Naive thymus-derived CD4-positive, alpha-beta T cell (primary cell): ENCODE measurements at regions of chr4 and their contacts with region 1.

Region 1: DNA sequence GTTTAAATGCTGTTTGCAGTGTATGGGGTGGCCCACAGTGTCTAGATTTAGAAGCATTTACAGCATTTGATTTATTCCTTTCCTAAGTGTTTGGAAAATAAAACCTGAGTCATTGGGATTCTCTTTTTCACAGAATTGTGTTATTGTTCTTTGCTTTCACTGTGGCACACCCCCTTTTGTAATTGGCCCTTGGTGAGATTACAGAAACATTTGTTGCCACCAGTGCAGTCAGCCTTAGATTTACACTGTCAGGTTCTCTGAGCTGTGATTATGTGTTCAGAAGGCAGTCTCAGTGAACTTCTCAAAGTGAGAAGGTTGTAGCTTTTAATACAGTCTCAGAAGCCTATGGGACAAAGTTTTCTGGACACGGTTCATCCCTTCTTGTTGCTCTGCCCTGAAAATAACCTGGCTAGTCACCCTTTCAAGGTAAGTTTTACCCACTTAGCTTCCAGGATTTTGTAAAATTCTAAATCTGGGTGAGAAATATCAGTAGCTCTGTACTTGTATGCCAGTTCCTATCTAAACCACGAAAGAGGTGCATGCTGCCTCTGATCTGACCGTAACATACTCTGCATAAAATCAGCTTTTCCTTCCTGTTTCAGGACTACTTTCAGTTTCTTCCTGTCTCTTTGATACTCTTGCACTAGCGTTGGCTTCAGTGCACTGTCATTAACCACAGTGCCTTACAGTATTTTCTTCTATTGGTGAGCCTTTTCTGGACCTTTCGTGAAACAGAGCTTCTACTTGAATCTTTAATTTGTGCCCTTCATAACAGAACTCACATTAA is 12.6 kb downstream of the RUFY3 start:
- DNase-seq: peak in 7 of 9 donors; percentile 52 to 74 (median 68)
- ATAC-seq: peak; percentile 91
- H3K4me3 ChIP-seq: peak overlapping the region; percentile 52
- H3K4me3 Mint-ChIP-seq: peak overlapping the region; percentile 67 to 92 (median 82)
- H3K27ac ChIP-seq: peak overlapping the region; percentile 73
- H3K27ac Mint-ChIP-seq: peak overlapping the region; percentile 33 to 94 (median 87)
- H3K4me1 ChIP-seq: peaks cover 34 to 42% of the 10 kb centered on the region in 2 donors
- H3K4me1 Mint-ChIP-seq: peaks cover 23 to 57% (median 48%) of the 10 kb centered on the region in 7 donors
- H3K27me3 ChIP-seq: no peaks in the 10 kb centered on the region
- H3K27me3 Mint-ChIP-seq: no peaks in the 10 kb centered on the region

Region 2: DNA sequence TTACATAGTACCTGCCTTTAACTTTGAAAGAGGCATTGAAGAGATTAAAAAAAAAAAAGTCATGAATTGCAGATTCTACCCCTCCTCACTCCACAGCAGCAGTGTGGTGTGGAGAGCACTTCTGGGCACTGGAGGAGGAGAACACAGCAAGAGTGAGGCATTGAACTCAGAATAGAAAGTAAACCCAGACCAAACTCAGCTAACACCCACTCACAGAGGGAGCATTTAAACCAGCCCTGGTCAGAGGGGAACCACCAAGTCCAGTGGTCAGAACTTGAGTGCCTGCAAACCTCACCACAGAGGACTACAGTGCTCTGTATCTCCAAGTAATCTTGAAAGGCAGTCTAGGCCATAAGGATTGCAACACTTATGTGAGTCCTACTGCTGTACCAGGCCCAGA is 1065.7 kb before region 1 on chr4:
- CTCF ChIA-PET with region 1: no interaction called
- POLR2A ChIA-PET with region 1: no interaction called
- intact Hi-C with region 1: no loop called
- DNase-seq: no peak
- ATAC-seq: no peak
- H3K4me3 ChIP-seq: no peak overlapping the region
- H3K4me3 Mint-ChIP-seq: no peak overlapping the region
- H3K27ac ChIP-seq: no peak overlapping the region
- H3K27ac Mint-ChIP-seq: no peak overlapping the region
- H3K4me1 ChIP-seq: no peaks in the 10 kb centered on the region
- H3K4me1 Mint-ChIP-seq: peaks cover 0 to 5% (median under 1%) of the 10 kb centered on the region in 7 donors
- H3K27me3 ChIP-seq: no peaks in the 10 kb centered on the region
- H3K27me3 Mint-ChIP-seq: peaks cover 4 to 13% (median 6%) of the 10 kb centered on the region in 5 donors

Region 3: GRCh38 chr4:70601422-70602039 is 132.8 kb before region 1 on chr4:
- CTCF ChIA-PET with region 1: no interaction called
- POLR2A ChIA-PET with region 1: no interaction called
- intact Hi-C with region 1: loop called in 1 of 2 experiments (anchors 1 kb)
- DNase-seq: peak; percentile 29 to 72 (median 61)
- ATAC-seq: peak; percentile 90
- H3K4me3 ChIP-seq: no peak overlapping the region
- H3K4me3 Mint-ChIP-seq: no peak overlapping the region
- H3K27ac ChIP-seq: no peak overlapping the region
- H3K27ac Mint-ChIP-seq: no peak overlapping the region
- H3K4me1 ChIP-seq: no peaks in the 10 kb centered on the region
- H3K4me1 Mint-ChIP-seq: peaks cover 0 to 4% (median 0%) of the 10 kb centered on the region in 7 donors
- H3K27me3 ChIP-seq: no peaks in the 10 kb centered on the region
- H3K27me3 Mint-ChIP-seq: peaks cover 0 to 20% (median 4%) of the 10 kb centered on the region in 5 donors

Region 4: GRCh38 chr4:70687821-70688794 is 46.3 kb before region 1 on chr4 and contains the start of gene UTP3:
- CTCF ChIA-PET with region 1: interaction called, 7 read pairs
- POLR2A ChIA-PET with region 1: interaction called, 56 read pairs
- intact Hi-C with region 1: loop called (anchors 1 kb)
- DNase-seq: peak; percentile 85 to 95 (median 92)
- ATAC-seq: peak; percentile 95
- H3K4me3 ChIP-seq: peak within 1 kb of the TSS; percentile 69
- H3K4me3 Mint-ChIP-seq: peak within 1 kb of the TSS; percentile 93 to 99 (median 98)
- H3K27ac ChIP-seq: peak within 1 kb of the TSS; percentile 94
- H3K27ac Mint-ChIP-seq: peak within 1 kb of the TSS; percentile 93 to 100 (median 99)
- H3K4me1 ChIP-seq: peaks cover 7 to 13% of the 10 kb centered on the region in 2 donors
- H3K4me1 Mint-ChIP-seq: peaks cover 12 to 48% (median 46%) of the 10 kb centered on the region in 7 donors
- H3K27me3 ChIP-seq: no peaks in the 10 kb centered on the region
- H3K27me3 Mint-ChIP-seq: no peaks in the 10 kb centered on the region
- total RNA-seq, gene UTP3: 17.4 to 44.9 (median 36.5) TPM

Region 5: DNA sequence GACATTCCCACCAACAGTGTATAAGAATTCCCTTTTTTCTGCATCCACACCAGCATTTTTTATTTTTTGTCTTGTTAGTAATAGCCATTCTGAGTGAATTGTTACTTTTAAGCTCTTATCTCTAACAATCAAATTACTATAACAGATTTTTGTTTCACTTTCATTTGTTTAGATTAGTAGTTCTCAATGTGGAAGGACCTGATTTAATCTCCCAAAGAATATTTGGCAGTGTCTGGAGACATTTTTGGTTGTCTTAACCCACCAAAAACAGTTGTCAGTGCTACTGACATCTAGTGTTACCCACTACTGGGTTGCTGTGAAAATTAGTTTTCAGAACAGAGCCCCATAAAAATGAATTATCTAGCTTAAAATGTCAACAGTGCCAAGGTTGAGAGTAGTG is 25.3 kb after region 1 on chr4:
- CTCF ChIA-PET with region 1: interaction called, 4 read pairs
- POLR2A ChIA-PET with region 1: interaction called, 3 read pairs
- intact Hi-C with region 1: loop called in 1 of 2 experiments (anchors 2 kb)
- DNase-seq: peak in 1 of 9 donors; percentile 5
- ATAC-seq: no peak
- H3K4me3 ChIP-seq: no peak overlapping the region
- H3K4me3 Mint-ChIP-seq: peak overlapping the region in 9 of 10 donors; percentile 19 to 64 (median 56)
- H3K27ac ChIP-seq: no peak overlapping the region
- H3K27ac Mint-ChIP-seq: peak overlapping the region in 6 of 9 donors; percentile 3 to 72 (median 16)
- H3K4me1 ChIP-seq: no peaks in the 10 kb centered on the region
- H3K4me1 Mint-ChIP-seq: peaks cover 13 to 23% (median 16%) of the 10 kb centered on the region in 7 donors
- H3K27me3 ChIP-seq: no peaks in the 10 kb centered on the region
- H3K27me3 Mint-ChIP-seq: no peaks in the 10 kb centered on the region

Region 6: DNA sequence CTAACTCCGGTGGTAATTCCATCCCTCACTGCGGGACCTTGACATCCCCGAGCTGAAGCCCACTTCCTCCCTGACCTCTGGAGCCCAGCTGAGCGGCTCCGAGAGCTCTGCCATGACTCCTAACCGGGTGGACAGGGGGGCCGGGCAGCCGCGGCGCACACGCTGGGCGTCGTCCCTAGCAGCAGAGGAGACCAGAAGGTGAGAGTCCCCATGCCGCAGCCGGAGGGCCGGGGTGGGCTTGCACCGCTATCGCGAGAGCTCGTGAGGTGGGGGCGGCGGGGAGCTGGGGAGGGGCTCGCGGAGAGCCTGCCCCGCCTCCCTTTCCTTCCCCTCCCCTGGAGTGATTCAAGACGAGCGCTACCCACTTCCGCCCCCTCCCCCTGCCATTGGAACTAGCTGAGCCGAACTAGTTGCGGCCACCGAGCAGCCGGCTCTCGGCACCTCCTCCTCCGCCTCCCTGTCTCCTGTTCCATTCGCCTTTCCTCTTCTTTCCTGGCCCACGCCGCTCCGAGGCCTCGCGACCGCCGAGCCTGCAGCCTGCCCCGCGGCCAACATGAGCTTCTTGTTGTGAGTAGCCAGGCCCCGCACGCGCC is 167.7 kb after region 1 on chr4 and contains the start of gene MOB1B:
- CTCF ChIA-PET with region 1: interaction called, 13 read pairs
- POLR2A ChIA-PET with region 1: interaction called, 12 read pairs
- intact Hi-C with region 1: loop called (anchors 1 kb)
- DNase-seq: peak; percentile 59 to 89 (median 84)
- ATAC-seq: peak; percentile 98
- H3K4me3 ChIP-seq: peak within 1 kb of the TSS; percentile 87
- H3K4me3 Mint-ChIP-seq: peak within 1 kb of the TSS; percentile 94 to 100 (median 98)
- H3K27ac ChIP-seq: peak within 1 kb of the TSS; percentile 78
- H3K27ac Mint-ChIP-seq: peak within 1 kb of the TSS; percentile 86 to 96 (median 89)
- H3K4me1 ChIP-seq: peaks cover 6 to 14% of the 10 kb centered on the region in 2 donors
- H3K4me1 Mint-ChIP-seq: peaks cover 23 to 46% (median 40%) of the 10 kb centered on the region in 7 donors
- H3K27me3 ChIP-seq: no peaks in the 10 kb centered on the region
- H3K27me3 Mint-ChIP-seq: peaks cover 0 to 2% (median 0%) of the 10 kb centered on the region in 5 donors
- total RNA-seq, gene MOB1B: 12.0 to 20.3 (median 13.5) TPM

Region 7: DNA sequence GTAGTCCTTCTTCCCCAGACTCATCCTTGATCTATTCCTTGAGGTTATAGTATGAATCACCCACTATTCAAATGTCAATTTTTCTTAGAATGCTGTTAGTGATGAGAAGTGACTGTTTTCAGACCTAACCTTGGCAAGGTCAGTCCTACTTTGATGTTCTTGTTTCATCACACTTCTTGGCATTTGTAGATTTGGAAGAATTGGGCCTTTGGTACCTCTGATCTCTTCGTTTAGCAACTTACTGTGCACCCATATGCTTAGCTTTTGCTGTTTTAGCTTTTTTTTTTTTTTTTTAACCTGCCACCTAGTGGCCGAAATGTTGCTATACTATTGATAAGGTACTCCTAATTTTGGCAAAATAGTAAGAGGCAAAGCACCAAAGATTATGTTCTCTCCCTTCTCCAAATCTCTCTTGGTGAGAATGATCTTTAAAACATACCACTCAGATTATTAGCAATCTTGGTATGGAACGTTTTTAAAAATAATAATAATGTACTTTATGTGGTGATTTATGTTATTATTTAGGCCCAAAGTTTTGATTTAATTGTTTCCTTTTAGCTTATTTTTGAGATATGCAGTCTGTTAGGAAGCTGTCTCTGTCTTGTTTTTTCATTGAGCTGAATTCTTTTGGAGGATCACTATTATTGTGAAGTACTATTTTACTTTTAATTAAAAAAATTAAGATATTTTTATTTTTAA is 275.7 kb after region 1 on chr4:
- CTCF ChIA-PET with region 1: no interaction called
- POLR2A ChIA-PET with region 1: interaction called, 5 read pairs
- intact Hi-C with region 1: loop called (anchors 2 kb)
- DNase-seq: peak in 6 of 9 donors; percentile 23 to 54 (median 48)
- ATAC-seq: peak; percentile 83
- H3K4me3 ChIP-seq: no peak overlapping the region
- H3K4me3 Mint-ChIP-seq: peak overlapping the region in 3 of 10 donors; percentile 5 to 44 (median 29)
- H3K27ac ChIP-seq: no peak overlapping the region
- H3K27ac Mint-ChIP-seq: peak overlapping the region in 8 of 9 donors; percentile 26 to 65 (median 48)
- H3K4me1 ChIP-seq: peaks cover 9 to 10% of the 10 kb centered on the region in 2 donors
- H3K4me1 Mint-ChIP-seq: peaks cover 23 to 52% (median 48%) of the 10 kb centered on the region in 7 donors
- H3K27me3 ChIP-seq: no peaks in the 10 kb centered on the region
- H3K27me3 Mint-ChIP-seq: no peaks in the 10 kb centered on the region

Region 8: DNA sequence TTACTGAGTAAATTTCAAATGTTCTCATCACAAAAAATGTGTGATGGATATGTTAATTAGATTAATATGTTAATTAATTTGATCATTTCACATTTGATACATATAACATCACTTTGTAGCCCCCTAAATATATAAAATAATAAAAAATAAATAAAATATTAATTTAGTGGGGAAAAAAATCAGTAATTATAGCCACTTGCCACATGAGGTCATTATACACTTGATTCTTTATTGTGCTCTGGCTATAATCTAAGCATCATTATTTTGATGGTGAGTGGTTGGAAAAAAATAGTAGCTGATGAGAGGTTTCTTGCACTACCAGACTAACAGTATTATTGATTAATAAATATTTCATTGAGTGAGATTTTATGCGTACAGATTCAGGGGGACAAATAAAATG is 316.4 kb after region 1 on chr4:
- CTCF ChIA-PET with region 1: no interaction called
- POLR2A ChIA-PET with region 1: no interaction called
- intact Hi-C with region 1: no loop called
- DNase-seq: no peak
- ATAC-seq: no peak
- H3K4me3 ChIP-seq: no peak overlapping the region
- H3K4me3 Mint-ChIP-seq: no peak overlapping the region
- H3K27ac ChIP-seq: no peak overlapping the region
- H3K27ac Mint-ChIP-seq: no peak overlapping the region
- H3K4me1 ChIP-seq: no peaks in the 10 kb centered on the region
- H3K4me1 Mint-ChIP-seq: peaks cover 0 to under 1% (median 0%) of the 10 kb centered on the region in 7 donors
- H3K27me3 ChIP-seq: no peaks in the 10 kb centered on the region
- H3K27me3 Mint-ChIP-seq: no peaks in the 10 kb centered on the region